ENCODE measurements at regions of chr10 and their contacts with region 1.

Region 1: DNA sequence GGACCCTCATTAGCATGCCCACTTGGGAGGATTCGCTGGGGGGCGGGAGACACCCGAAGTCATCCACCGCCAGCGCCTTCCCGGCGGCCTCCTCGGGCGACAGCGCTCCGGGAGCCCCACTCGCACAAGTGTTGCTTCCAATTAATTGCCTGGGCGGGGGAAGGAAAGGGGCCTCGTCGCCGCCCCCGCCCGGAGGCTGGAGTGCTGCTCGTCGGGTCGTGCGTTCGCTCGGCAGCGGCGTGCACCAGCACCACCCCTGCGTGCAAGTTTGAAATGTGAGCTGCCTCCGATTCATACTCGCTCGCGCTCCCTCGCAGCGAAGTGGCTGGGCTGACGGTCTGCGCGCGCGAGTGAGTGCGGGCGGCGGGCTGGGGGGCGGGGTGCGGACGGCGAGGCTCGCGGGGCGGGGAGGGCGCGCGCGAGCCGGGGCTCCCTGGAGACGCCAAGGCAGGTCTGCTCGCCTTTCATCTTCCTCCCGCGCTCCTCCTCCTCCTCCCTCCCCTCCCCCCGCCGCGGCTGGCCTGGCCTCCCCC is 104.6 kb upstream of the PPIF start:
- DNase-seq: peak; percentile 65
- H3K4me3 Mint-ChIP-seq: peak overlapping the region; percentile 81
- H3K27ac Mint-ChIP-seq: peak overlapping the region; percentile 83
- H3K4me1 Mint-ChIP-seq: peaks cover 71% of the 10 kb centered on the region
- H3K27me3 Mint-ChIP-seq: no peaks in the 10 kb centered on the region

Region 2: DNA sequence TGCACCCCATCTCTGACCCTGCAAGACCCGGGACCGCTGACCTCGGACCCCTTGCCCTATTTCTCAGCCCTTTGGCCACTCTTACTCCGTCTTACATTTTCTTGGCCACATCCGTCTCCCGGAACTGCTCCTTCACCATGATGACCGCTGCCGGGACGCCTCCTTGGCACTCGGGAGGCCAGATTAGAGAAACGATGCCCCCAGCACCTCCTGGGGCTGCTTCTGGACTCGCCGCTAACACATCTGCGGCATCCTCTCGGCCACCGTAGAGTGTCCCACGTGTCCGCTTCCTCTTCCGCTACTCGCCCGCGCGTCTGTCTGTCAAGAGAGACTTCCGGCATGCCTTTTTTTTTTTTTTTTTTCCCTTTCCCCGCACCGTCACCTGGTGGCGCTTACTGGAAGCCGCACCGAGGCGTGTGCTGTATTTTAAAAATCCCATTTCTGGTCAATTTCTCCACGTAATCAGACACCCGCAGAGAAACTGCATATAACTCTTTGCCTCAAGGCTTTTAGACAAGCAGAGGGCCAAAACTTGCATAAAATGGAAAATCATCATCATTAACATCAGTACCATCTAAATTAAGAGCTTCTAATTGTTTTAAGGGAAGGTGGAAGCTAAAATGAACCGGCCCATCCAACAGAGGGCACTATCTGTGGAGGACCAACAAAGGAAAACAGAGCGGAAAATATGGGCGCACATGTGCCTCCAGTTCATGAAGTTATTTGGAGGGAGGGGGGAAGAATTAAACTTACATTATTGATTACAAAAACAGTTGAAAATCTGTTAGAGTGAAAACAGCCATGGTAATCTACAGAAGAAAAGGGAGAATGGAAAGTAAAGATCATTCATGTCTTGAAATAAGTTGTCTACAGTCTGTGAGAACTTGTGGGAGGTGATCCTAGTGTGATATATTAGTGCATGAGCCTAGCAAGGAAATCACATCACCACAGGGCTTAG is 1213.1 kb before region 1 on chr10 and contains the start of gene POLR3A:
- intact Hi-C with region 1: loop called (anchors 1 kb)
- DNase-seq: peak; percentile 89
- H3K4me3 Mint-ChIP-seq: peak within 1 kb of the TSS; percentile 99
- H3K27ac Mint-ChIP-seq: peak within 1 kb of the TSS; percentile 91
- H3K4me1 Mint-ChIP-seq: peaks cover 28% of the 10 kb centered on the region
- H3K27me3 Mint-ChIP-seq: no peaks in the 10 kb centered on the region
- total RNA-seq, gene POLR3A: 29.5 and 30.8 TPM in 2 replicates

Region 3: GRCh38 chr10:79112881-79113431 is 129.7 kb before region 1 on chr10:
- intact Hi-C with region 1: no loop called
- DNase-seq: no peak
- H3K4me3 Mint-ChIP-seq: no peak overlapping the region
- H3K27ac Mint-ChIP-seq: no peak overlapping the region
- H3K4me1 Mint-ChIP-seq: peaks cover 35% of the 10 kb centered on the region
- H3K27me3 Mint-ChIP-seq: no peaks in the 10 kb centered on the region

Region 4: GRCh38 chr10:79286318-79286951 is 43.7 kb after region 1 on chr10:
- intact Hi-C with region 1: loop called (anchors 1 kb)
- DNase-seq: peak; percentile 65
- H3K4me3 Mint-ChIP-seq: peak overlapping the region; percentile 71
- H3K27ac Mint-ChIP-seq: peak overlapping the region; percentile 89
- H3K4me1 Mint-ChIP-seq: peaks cover 61% of the 10 kb centered on the region
- H3K27me3 Mint-ChIP-seq: no peaks in the 10 kb centered on the region

Region 5: DNA sequence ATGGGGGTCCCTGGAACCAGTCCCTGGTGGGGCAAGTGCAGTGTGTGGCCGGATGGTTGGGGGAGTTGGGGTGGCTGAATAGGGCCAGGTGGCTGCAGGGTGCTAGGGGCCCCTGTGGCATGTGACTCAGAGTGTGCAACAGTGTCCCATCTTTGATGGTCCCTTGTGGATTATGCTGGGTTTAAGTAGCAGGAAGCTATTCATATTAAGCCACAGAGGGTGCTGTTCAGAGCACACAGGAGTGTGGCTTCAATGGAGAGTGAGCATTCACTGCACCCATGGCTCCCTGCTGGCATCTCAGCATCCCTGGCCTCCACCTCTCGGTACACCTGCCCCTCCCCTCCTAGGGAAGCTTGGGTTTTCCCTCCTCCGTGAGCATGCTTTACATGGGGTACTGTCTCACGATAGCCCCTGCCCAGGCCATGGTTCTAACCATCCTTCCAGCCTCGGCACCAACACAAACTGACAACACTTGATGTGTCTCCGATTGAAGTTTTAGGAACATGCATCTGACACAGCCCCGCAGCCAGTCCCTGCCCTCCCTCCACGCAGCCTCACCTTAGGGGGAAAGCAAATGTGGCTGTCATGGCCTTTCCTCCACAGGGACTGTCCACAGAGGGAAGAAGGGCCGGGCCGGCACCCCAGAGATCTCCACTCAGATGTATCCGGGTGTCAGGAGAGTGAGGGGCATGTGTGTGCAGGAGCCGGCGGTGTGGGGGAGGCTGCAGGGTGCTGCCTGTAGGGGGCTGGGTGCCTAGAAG is 74.2 kb after region 1 on chr10:
- intact Hi-C with region 1: loop called (anchors 2 kb)
- DNase-seq: peak; percentile 34
- H3K4me3 Mint-ChIP-seq: peak overlapping the region; percentile 65
- H3K27ac Mint-ChIP-seq: peak overlapping the region; percentile 95
- H3K4me1 Mint-ChIP-seq: peaks cover 71% of the 10 kb centered on the region
- H3K27me3 Mint-ChIP-seq: no peaks in the 10 kb centered on the region

Region 6: DNA sequence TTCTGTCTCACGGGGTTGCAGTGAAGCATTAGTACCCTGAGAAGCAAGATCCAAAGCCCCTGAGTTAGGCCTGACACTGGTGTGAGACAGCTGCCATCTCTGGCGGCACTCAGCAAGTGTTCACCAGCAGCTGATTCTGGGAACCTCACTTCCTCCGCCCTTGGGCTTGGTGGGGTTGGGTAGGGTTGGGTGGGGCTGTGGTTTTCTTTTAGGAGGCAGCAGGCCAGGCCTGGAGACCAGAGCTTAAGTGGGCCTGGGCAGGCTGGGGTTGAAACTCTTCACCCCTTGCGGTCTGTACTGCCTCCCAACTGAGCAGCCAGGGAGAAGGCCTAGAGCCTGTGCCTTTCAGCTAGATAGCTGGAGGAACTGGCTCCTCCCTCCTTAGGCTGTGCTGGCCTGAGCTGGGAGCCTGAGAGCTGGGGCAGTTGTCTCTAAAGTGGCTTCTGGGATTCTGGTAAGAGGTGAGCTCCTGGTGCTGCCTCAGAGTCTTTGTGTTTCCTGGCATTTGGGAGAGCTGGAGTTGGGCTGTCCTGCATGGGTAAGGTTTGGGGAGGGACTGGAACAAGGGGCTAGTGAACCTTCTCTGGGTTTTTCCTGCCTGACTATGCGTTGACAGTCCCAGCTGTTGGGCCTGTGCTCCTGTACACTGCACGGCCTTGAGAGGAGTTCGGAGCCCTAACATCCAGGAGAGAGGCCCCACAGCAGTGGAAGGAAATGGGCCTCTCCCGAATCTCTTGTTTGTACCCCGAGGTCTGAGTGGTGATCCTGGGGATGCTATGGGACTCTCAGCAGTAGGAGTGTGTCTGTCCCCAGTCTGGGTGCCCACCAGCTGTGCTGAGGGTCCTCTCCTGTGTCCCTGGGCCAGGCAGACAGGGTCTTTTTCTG is 1216.6 kb after region 1 on chr10:
- intact Hi-C with region 1: loop called (anchors 10 kb)
- DNase-seq: peak; percentile 67
- H3K4me3 Mint-ChIP-seq: peak overlapping the region; percentile 98
- H3K27ac Mint-ChIP-seq: peak overlapping the region; percentile 88
- H3K4me1 Mint-ChIP-seq: peaks cover 86% of the 10 kb centered on the region
- H3K27me3 Mint-ChIP-seq: no peaks in the 10 kb centered on the region

Measured in activated T-helper 1 cell treated with anti-CD3 and anti-CD28 coated beads, Interleukin-12 subunit alpha, Interleukin-12 subunit beta, Interleukin-2, Interleukin-4 antibody, amounts not matched to agents 30 ng/mL and 10 ng/mL and 1 ng/mL, durations not matched to agents 14 hours and 24 hours and 36 hours (primary cell).